PC-9 (cell line): ENCODE measurements at regions of chr7 and their contacts with region 1.

Region 1: DNA sequence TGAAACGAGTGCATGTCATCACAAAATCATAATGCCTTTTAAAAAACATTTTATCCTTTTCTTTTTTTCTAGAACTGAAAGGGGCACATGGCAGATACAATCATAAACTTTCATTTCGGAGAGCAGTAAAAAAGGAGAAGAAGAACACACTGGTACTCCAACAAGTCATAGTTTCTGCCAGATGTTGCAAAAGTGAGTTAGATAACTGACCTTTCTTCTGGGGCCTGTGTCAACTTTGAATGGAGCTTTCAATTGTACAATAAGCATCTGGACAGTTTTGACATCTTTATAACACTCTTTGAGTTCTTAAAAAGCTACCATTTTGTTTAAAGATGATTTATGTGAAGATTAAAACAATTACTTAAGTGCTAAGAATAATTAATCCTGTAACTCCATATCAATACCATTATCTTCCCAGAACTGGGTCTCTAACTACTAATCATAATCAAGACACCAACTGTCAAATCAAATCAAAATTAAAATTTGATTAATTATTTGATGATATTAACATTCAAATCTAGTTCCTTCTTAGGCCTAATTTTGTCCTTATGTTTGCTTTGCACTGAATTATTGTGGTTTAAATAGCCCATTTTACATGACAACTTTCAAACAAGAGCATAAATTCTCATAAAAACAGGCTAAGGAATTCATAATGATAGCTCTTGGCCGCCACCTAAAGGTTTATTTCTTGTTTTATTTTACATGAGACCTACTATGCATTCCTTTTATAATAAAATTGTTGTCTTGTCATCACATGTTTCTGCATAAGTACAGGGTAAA is 19.5 kb upstream of the ITGB8 start:
- DNase-seq: peak in 1 of 2 experiments; percentile 56
- H3K4me3 ChIP-seq: no peak overlapping the region
- H3K27ac ChIP-seq: no peak overlapping the region
- H3K4me1 ChIP-seq: no peaks in the 10 kb centered on the region
- H3K27me3 ChIP-seq: no peaks in the 10 kb centered on the region
- CTCF ChIP-seq: peak; percentile 92

Region 2: DNA sequence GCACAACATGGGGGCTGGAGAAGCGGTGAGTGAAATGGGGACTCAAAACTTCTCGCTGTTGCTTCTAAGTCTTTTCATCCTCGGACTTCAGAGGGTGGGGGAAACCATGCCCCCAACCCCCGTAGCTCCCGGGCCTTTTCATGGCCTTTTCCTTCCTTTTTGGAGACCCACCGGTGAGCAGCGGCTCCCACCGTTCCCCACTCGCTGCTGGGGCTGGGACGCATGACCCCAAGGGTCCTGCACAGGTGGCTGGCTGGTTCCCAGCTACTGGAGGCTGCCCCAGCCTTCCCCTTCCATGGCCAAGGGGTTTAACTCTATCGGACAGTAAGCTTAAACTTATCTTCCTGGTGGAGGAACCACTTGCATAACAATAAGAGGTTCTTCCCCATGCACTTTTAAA is 971.6 kb before region 1 on chr7:
- CTCF ChIA-PET with region 1: no interaction called
- POLR2A ChIA-PET with region 1: no interaction called
- intact Hi-C with region 1: no loop called
- DNase-seq: no peak
- H3K4me3 ChIP-seq: no peak overlapping the region
- H3K27ac ChIP-seq: no peak overlapping the region
- H3K4me1 ChIP-seq: no peaks in the 10 kb centered on the region; the same call in 1 of the 2 replicates
- H3K27me3 ChIP-seq: no peaks in the 10 kb centered on the region
- CTCF ChIP-seq: no peak

Region 3: GRCh38 chr7:20116869-20117268 is 194.3 kb before region 1 on chr7:
- CTCF ChIA-PET with region 1: no interaction called
- POLR2A ChIA-PET with region 1: no interaction called
- intact Hi-C with region 1: no loop called
- DNase-seq: no peak
- H3K4me3 ChIP-seq: no peak overlapping the region
- H3K27ac ChIP-seq: no peak overlapping the region
- H3K4me1 ChIP-seq: no peaks in the 10 kb centered on the region
- H3K27me3 ChIP-seq: no peaks in the 10 kb centered on the region
- CTCF ChIP-seq: no peak

Region 4: DNA sequence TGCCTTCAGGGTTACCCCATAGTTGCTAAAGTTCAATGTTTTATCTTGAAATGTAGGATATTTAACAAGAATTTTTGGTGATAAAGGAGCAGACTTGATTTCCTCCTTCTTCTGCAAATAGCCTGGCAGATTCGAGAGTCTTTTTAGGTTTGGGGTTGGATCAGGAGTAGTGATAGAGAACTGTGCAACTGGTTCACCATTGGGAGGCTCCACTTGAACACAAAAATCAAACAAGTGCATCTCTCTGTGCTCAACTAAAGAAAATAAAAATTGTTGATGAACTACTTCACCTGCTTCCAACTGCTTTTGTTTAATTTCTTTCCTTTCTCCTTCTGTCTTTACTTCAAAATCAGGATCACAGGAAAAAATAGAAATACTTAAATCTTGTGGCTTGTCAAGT is 152.5 kb before region 1 on chr7:
- CTCF ChIA-PET with region 1: no interaction called
- POLR2A ChIA-PET with region 1: no interaction called
- intact Hi-C with region 1: loop called (anchors 5 kb)
- DNase-seq: no peak
- H3K4me3 ChIP-seq: no peak overlapping the region
- H3K27ac ChIP-seq: no peak overlapping the region
- H3K4me1 ChIP-seq: no peaks in the 10 kb centered on the region
- H3K27me3 ChIP-seq: no peaks in the 10 kb centered on the region
- CTCF ChIP-seq: no peak; the same call in 1 of the 2 replicates

Region 5: GRCh38 chr7:20241194-20241910 is 69.8 kb before region 1 on chr7:
- CTCF ChIA-PET with region 1: no interaction called
- POLR2A ChIA-PET with region 1: no interaction called
- intact Hi-C with region 1: loop called (anchors 2 kb)
- DNase-seq: peak in 1 of 2 experiments; percentile 54
- H3K4me3 ChIP-seq: no peak overlapping the region
- H3K27ac ChIP-seq: no peak overlapping the region
- H3K4me1 ChIP-seq: peaks cover 15% of the 10 kb centered on the region
- H3K27me3 ChIP-seq: no peaks in the 10 kb centered on the region
- CTCF ChIP-seq: no peak